Breast epithelium (tissue), 4 donors: ENCODE measurements at regions of chr11 and their contacts with region 1.

Region 1: DNA sequence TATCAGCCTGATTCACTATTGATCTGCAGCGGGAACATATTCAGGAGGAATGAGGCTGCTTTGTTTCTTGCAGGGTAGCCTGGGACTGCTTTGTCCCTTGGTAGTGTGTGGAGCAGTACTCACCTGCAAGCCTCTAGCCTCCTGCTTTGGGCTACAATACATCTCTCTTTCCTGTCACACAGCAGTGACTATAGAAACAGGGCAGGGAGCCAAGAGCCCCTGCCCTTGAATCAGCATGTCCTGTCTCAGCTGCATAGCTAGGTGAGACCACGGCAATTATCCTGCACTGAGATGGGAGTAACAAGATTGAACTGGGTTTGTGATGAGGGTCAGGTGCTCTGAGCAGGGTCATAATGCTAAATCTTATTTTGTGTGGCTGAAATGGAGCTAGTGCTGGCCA is 191.9 kb downstream of the NELL1 start:
- DNase-seq: no peak
- H3K4me3 ChIP-seq: no peak overlapping the region
- H3K27ac ChIP-seq: no peak overlapping the region
- H3K4me1 ChIP-seq: no peaks in the 10 kb centered on the region
- H3K27me3 ChIP-seq: no peaks in the 10 kb centered on the region
- CTCF ChIP-seq: no peak
- POLR2A ChIP-seq: no peak

Region 2: DNA sequence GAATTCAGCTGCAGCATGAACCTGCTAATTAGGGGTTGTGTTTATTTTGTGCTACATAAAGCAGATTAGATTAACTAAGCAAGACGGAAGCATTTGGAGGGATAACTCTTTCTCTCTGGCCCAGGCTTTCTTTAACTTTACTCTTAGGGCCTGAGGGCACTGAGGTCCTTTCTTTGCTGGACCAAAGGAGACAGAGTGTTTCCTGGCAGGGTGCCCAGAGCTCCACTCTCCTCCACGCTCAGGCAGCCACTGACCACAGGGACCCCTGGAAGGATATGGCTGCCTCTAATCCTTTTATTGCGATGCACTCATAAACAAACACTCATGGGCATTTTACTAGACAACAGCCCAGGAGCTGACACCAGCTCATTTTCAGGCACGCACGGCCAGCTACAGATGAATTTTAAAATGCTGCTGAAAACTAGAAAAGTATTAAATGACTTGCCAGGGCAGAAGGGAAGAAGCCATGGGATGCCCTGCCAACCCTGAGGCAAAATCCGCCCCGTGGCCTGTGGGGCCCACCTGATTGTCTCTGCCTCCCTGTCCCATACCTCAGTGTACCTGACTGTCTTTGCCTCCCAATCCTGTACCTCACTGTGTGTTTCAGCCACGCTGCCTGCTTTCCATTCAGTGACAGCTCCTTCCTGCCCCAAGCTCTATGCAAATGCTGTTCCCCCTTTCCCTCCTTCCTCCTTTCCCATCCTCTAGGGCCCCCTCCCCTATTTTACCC is 1341.2 kb before region 1 on chr11:
- intact Hi-C with region 1: no loop called
- DNase-seq: no peak
- H3K4me3 ChIP-seq: no peak overlapping the region
- H3K27ac ChIP-seq: no peak overlapping the region
- H3K4me1 ChIP-seq: no peaks in the 10 kb centered on the region
- H3K27me3 ChIP-seq: peaks cover 0 to 9% of the 10 kb centered on the region in 2 donors
- CTCF ChIP-seq: no peak
- POLR2A ChIP-seq: no peak

Region 3: GRCh38 chr11:20080032-20080685 is 781.2 kb before region 1 on chr11:
- intact Hi-C with region 1: loop called (anchors 5 kb)
- DNase-seq: no peak
- H3K4me3 ChIP-seq: no peak overlapping the region
- H3K27ac ChIP-seq: no peak overlapping the region
- H3K4me1 ChIP-seq: no peaks in the 10 kb centered on the region
- H3K27me3 ChIP-seq: no peaks in the 10 kb centered on the region
- CTCF ChIP-seq: no peak
- POLR2A ChIP-seq: no peak